A673 (cell line): ENCODE measurements at regions of chr20 and their contacts with region 1.

Region 1: DNA sequence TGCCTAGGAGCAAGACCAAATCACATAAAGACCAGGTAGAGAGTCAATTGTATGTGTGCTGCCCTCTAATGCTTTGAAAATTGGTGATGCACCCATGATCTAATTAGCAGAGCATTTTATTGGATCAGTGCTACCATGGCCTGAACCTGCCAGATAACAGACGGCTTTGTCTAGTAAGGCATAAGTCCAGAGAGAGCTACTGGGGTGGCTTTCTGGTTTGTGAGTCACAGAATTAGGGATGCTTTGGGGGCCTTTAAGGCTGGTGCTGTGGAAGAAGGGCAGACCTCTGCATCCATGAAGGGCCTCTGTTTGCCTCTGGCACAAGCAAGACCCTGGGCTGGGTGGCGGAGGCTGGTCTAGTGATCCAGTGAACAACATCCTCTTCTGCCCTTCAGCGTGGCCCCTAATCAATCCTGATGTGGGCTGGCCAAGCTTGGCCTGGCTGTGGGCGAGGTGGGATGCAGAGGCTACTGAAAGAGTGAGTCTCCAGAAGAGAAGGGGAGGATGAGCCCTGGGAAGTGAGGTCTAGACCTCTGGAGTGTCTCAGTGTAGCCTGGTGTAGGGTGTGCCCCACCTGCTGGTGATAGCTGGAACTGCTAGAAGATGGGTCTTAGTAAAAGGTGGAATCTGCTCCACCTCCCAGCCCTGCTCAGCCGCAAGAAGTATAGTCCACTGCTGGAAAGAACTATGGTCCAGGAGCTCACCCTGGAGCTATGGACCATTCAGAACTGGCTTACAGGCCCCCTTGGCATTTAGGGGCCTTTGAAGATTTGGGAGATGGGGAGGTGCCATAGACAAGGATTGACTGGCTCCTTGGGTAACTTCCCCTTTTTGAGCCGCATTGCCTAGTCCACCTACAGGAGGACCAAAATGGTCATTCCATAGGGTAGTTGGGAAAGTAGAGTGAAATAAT is 36.7 kb upstream of the AAR2 start:
- DNase-seq: peak; percentile 80
- H3K4me3 ChIP-seq: no peak overlapping the region
- H3K27ac ChIP-seq: no peak overlapping the region
- H3K4me1 ChIP-seq: no peaks in the 10 kb centered on the region
- H3K27me3 ChIP-seq: no peaks in the 10 kb centered on the region
- CTCF ChIP-seq: peak; percentile 86

Region 2: DNA sequence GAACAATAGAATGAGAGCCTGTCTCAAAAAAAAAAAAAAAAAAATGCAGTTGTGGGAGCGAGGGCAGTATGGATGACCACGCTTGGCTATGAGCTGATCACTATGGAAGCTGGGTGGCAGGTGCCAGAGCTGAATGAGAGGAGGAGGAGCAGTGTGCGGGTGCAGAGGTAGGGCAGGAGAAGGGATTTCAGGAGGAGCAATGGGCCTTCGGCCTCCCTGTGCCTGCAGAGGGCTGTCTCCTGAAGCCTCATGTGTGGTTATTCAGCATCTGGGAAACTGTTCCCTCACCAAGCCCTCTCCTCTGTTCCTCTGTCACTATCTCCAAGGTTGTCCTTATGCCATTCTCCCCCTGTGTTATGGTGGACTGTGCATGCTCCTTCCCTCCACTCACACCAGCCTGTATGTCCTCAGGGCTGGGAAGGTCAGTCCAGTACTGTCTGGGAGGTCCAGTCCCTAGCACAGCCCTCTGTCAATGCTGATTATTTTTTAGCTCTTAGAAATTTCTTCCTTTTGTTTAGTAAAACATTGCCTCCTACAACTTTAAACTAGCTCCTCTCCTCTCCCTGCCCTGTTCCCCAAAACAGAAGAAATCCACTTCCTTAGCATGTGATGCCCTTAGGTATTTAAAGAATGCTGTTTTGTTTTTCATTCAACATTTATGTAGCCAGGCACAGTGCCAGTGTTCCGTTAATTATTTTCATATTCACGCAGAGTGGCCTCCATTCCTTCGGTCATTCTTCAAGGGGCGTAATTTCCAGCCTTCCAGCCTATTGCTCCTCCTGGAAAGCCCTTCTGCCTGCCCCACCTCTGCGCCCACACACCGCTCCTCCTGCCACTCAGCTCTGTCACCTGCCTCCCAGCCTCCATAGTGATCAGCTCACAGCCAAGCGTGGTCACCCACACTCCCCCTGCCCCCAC is 182.3 kb before region 1 on chr20:
- CTCF ChIA-PET with region 1: no interaction called
- POLR2A ChIA-PET with region 1: no interaction called
- intact Hi-C with region 1: no loop called
- DNase-seq: peak; percentile 19
- H3K4me3 ChIP-seq: no peak overlapping the region
- H3K27ac ChIP-seq: no peak overlapping the region
- H3K4me1 ChIP-seq: no peaks in the 10 kb centered on the region
- H3K27me3 ChIP-seq: no peaks in the 10 kb centered on the region
- CTCF ChIP-seq: no peak

Region 3: GRCh38 chr20:36153736-36154699 is 45.6 kb before region 1 on chr20:
- CTCF ChIA-PET with region 1: interaction called, 7 read pairs
- POLR2A ChIA-PET with region 1: no interaction called
- intact Hi-C with region 1: loop called (anchors 2 kb)
- DNase-seq: peak; percentile 77
- H3K4me3 ChIP-seq: peak overlapping the region; percentile 60
- H3K27ac ChIP-seq: no peak overlapping the region
- H3K4me1 ChIP-seq: no peaks in the 10 kb centered on the region
- H3K27me3 ChIP-seq: no peaks in the 10 kb centered on the region
- CTCF ChIP-seq: no peak

Region 4: DNA sequence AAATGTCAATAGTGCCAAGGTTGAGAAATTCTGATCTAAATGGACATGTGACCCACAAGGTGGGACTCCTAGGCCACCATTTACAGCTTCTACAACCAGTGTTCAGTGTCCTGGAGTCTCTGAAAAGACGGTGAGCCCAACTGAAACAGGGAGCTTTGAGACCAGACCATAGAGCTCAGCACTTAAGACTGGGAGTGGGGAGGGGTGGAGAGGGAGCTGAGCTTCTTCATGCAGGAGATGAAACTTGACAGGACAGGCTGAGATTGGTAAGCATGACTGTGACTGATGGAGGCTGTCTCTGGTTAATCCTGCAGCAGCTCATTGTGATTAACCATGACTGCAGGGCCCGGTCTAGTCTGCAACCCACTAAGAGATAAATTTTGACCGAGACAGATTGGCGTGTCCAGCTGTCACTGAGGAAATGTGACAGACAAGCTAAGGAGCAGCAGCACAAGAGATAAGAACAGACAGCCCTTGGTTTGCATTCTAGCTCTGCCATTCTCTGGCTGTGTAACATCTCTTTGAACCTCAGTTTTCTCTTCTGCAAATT is 35.2 kb after region 1 on chr20:
- CTCF ChIA-PET with region 1: interaction called, 10 read pairs
- POLR2A ChIA-PET with region 1: no interaction called
- intact Hi-C with region 1: no loop called
- DNase-seq: no peak
- H3K4me3 ChIP-seq: no peak overlapping the region
- H3K27ac ChIP-seq: no peak overlapping the region
- H3K4me1 ChIP-seq: peaks cover 4% of the 10 kb centered on the region
- H3K27me3 ChIP-seq: no peaks in the 10 kb centered on the region
- CTCF ChIP-seq: no peak